Caco-2 (cell line): ENCODE measurements at regions of chr17 and their contacts with region 1.

Region 1: GRCh38 chr17:35170968-35171771 is 23.0 kb downstream of the SLC35G3 start:
- DNase-seq: no peak
- H3K4me3 ChIP-seq: no peak overlapping the region
- H3K4me3 Mint-ChIP-seq: no peak overlapping the region
- H3K27ac Mint-ChIP-seq: no peak overlapping the region
- H3K4me1 ChIP-seq: 0 out of 2 replicates have a peak, but pooled peaks cover 7% of the 10 kb centered on the region
- H3K4me1 Mint-ChIP-seq: peaks cover 3% of the 10 kb centered on the region
- H3K27me3 ChIP-seq: no peaks in the 10 kb centered on the region; the same call in 1 of the 2 replicates
- H3K27me3 Mint-ChIP-seq: peaks cover 3% of the 10 kb centered on the region
- CTCF ChIP-seq: no peak

Region 2: GRCh38 chr17:35312790-35313711 is 141.9 kb after region 1 on chr17:
- CTCF ChIA-PET with region 1: no interaction called
- POLR2A ChIA-PET with region 1: no interaction called
- intact Hi-C with region 1: loop called (anchors 5 kb)
- DNase-seq: peak in 1 of 2 experiments; percentile 59
- H3K4me3 ChIP-seq: no peak overlapping the region
- H3K4me3 Mint-ChIP-seq: no peak overlapping the region
- H3K27ac Mint-ChIP-seq: no peak overlapping the region
- H3K4me1 ChIP-seq: no peaks in the 10 kb centered on the region; the same call in 1 of the 2 replicates
- H3K4me1 Mint-ChIP-seq: no peaks in the 10 kb centered on the region
- H3K27me3 ChIP-seq: no peaks in the 10 kb centered on the region
- H3K27me3 Mint-ChIP-seq: peaks cover 3% of the 10 kb centered on the region
- CTCF ChIP-seq: peak; percentile 72 to 80